ENCODE measurements at regions of chr6 and their contacts with region 1.

Region 1: GRCh38 chr6:75243333-75244062 is at the start of gene COX7A2:
- DNase-seq: peak; percentile 96
- ATAC-seq: peak; percentile 98
- H3K4me3 ChIP-seq: peak within 1 kb of the TSS; percentile 84 to 93 (median 89)
- H3K27ac ChIP-seq: peak within 1 kb of the TSS; percentile 91
- H3K4me1 ChIP-seq: peaks cover 22% of the 10 kb centered on the region
- H3K27me3 ChIP-seq: no peaks in the 10 kb centered on the region; a peak in 1 of 5 replicates
- CTCF ChIP-seq: 0 out of 2 replicates have a peak, but pooled peaks have one; percentile 5
- EP300 ChIP-seq: peak; percentile 35 to 40; a peak in 2 of 4 replicates
- POLR2A ChIP-seq: peak; percentile 86 to 96
- RAD21 ChIP-seq: no peak
- total RNA-seq, gene COX7A2: 481 and 556 TPM in 2 replicates

Region 2: GRCh38 chr6:75130784-75131183 is 112.7 kb before region 1 on chr6:
- CTCF ChIA-PET with region 1: no interaction called
- POLR2A ChIA-PET with region 1: no interaction called
- in situ Hi-C with region 1: no loop called
- intact Hi-C with region 1: no loop called
- DNase-seq: no peak
- ATAC-seq: no peak
- H3K4me3 ChIP-seq: no peak overlapping the region
- H3K27ac ChIP-seq: no peak overlapping the region
- H3K4me1 ChIP-seq: no peaks in the 10 kb centered on the region
- H3K27me3 ChIP-seq: no peaks in the 10 kb centered on the region
- CTCF ChIP-seq: no peak
- EP300 ChIP-seq: no peak
- POLR2A ChIP-seq: no peak
- RAD21 ChIP-seq: no peak

Region 3: DNA sequence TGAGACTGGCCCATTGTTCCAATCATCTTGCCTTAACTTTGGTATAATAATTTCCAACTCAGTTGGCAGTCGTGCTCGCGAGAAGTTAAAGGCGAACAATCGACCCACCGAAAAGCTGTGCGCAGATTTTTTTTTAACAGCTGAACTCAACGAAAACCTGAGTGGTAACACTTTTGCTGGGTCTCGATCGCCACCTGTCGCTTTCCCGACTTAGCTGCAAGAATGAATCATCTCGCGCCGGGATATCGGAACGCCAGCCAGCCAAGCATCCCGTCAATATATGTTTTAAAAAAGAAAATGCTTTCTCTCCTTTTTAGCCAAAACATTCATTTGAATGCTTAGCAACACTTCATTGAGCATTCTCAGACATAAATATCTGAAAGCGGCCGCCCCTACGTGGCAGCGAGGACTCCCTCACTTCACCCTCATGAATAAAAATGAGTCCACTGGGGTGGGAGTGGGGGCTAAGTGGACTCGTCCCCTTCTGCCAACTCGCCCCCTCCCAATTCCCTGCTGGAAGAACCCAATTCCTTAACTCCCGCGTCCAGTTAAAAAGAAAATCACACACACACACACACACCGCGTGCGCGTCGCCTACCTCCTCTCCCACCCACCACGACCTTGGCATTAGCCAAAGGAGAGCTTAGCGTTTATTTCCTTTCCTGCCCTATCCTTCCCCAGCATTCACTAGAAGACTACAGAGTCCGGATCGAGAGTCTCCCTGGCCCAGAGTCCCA is 39.1 kb before region 1 on chr6:
- CTCF ChIA-PET with region 1: no interaction called
- POLR2A ChIA-PET with region 1: no interaction called
- in situ Hi-C with region 1: no loop called
- intact Hi-C with region 1: no loop called
- DNase-seq: peak; percentile 40
- ATAC-seq: peak; percentile 24; the same call in 2 of the 3 replicates
- H3K4me3 ChIP-seq: no peak overlapping the region
- H3K27ac ChIP-seq: no peak overlapping the region
- H3K4me1 ChIP-seq: no peaks in the 10 kb centered on the region
- H3K27me3 ChIP-seq: peaks cover 6 to 64% of the 10 kb centered on the region in 2 experiments; a peak in 4 of 5 replicates
- CTCF ChIP-seq: peak; percentile 72
- EP300 ChIP-seq: no peak
- POLR2A ChIP-seq: no peak
- RAD21 ChIP-seq: peak; percentile 69

Region 4: DNA sequence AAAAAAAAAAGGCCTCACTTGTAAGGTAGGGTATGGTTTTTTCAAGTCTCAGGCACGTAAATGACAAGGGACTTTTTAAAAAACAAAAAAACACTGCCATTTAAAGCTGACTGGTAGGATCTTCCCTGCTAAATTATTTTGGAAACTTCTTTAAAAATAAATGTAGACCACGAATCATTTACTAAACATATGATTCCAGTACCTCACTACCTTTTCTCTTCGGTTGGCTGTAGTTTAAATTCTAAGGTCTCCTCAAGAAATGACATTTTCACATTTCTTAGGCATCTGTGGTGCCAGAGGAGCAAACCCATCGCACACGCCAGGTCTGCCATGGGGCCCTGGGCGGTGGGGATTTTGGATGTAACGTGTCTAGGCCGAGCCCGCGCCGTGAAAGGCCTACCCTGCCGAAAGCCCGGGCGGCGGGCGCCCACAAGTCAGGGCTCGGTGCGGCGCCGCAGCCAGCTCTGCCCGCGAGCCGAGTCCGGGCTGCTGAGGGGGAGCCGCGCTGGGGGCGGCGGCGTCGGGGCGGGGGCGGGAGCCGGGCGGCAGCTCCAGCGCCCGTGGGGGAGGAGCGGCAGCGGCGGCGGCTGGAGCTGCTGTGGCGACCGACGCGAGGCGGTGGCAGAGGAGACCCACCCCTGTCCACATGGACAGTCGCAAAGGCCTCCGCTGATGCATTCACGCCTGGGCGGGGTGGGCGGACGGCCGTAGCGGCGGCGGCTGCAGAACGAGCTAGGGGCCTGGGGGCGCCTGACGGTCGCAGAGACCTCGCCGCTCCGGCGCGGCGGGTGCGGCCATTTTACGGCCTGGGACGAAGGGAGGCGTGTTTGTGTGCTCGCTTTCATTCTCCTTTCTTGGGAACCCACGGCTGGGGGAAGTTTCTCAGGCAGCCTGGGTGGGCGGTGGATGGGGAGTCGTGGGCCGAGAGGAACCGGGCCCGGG is 358.1 kb after region 1 on chr6 and contains the start of gene SENP6:
- CTCF ChIA-PET with region 1: no interaction called
- POLR2A ChIA-PET with region 1: interaction called, 14 read pairs
- in situ Hi-C with region 1: no loop called
- intact Hi-C with region 1: no loop called
- DNase-seq: peak; percentile 72
- ATAC-seq: peak; percentile 95
- H3K4me3 ChIP-seq: peak within 1 kb of the TSS; percentile 83 to 96 (median 90)
- H3K27ac ChIP-seq: peak within 1 kb of the TSS; percentile 95
- H3K4me1 ChIP-seq: peaks cover 39% of the 10 kb centered on the region
- H3K27me3 ChIP-seq: no peaks in the 10 kb centered on the region; a peak in 1 of 5 replicates
- CTCF ChIP-seq: 0 out of 2 replicates have a peak, but pooled peaks have one; percentile 9
- EP300 ChIP-seq: peak in 1 of 2 experiments; percentile 14; a peak in 1 of 4 replicates
- POLR2A ChIP-seq: peak; percentile 89 to 95
- RAD21 ChIP-seq: peak; percentile 12; the same call in 1 of the 2 replicates
- total RNA-seq, gene SENP6: 45.2 and 50.1 TPM in 2 replicates

Region 5: GRCh38 chr6:76166874-76167273 is 923.4 kb after region 1 on chr6:
- CTCF ChIA-PET with region 1: no interaction called
- POLR2A ChIA-PET with region 1: no interaction called
- in situ Hi-C with region 1: no loop called
- intact Hi-C with region 1: no loop called
- DNase-seq: no peak
- ATAC-seq: no peak
- H3K4me3 ChIP-seq: no peak overlapping the region
- H3K27ac ChIP-seq: no peak overlapping the region
- H3K4me1 ChIP-seq: no peaks in the 10 kb centered on the region
- H3K27me3 ChIP-seq: no peaks in the 10 kb centered on the region
- CTCF ChIP-seq: no peak
- EP300 ChIP-seq: no peak
- POLR2A ChIP-seq: no peak
- RAD21 ChIP-seq: no peak